Endothelial cell of umbilical vein (primary cell): ENCODE measurements at regions of chr6 and their contacts with region 1.

Region 1: DNA sequence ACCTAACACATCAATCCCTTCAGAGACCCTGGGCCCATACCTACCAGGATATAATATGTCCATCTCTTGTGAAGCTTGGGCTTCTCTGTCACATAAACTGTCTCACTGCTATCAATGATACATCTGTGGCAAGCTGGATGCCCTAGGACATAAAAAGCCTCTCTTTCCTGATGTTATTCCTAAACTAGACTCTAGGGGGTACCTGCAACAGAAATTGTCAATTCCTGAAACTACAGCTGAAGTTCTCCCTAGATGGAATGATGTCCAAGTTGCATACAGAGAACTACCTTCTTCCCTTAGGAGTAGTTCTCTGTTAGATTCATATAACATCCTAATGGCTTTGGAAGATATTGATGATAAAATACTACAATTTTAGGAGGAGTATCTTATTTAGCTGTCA is 35.8 kb downstream of the TBX18 start:
- DNase-seq: peak; percentile 39
- H3K4me3 ChIP-seq: no peak overlapping the region
- H3K27ac ChIP-seq: no peak overlapping the region
- H3K4me1 ChIP-seq: peaks cover 24% of the 10 kb centered on the region
- H3K27me3 ChIP-seq: no peaks in the 10 kb centered on the region
- CTCF ChIP-seq: peak; percentile 19 to 31
- POLR2A ChIP-seq: no peak

Region 2: DNA sequence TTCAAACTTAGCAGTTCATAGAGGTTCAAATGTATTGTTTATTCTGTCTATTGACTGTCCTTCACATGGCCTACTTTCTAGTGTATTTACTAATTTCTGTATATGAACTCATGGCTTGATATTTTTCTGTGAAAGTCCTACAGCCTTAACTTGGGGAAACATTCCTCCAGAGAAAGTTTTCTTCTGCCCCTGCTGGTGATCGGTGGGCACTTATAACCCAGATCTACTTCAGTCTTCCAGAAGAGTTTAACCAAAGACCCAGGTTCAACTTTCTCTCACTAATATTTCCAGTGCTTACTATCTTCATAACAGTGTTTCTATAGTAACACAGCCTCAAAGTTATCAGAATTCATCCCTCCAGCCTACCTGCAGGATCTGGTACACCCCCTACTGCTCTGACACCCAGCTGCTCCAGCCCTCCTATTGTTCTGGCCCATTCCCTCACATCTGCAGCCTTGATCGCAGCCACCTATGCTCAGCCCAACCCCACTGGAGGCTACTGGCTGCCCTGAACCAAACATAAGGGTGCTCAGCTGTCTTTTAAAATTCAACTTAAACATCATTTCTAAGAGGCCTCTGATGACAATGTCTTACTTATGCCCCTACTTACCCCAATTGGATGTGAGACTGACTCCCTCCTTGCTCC is 36.5 kb before region 1 on chr6:
- CTCF ChIA-PET with region 1: no interaction called
- POLR2A ChIA-PET with region 1: no interaction called
- dilution Hi-C with region 1: no loop called
- intact Hi-C with region 1: no loop called
- DNase-seq: no peak
- H3K4me3 ChIP-seq: no peak overlapping the region
- H3K27ac ChIP-seq: no peak overlapping the region
- H3K4me1 ChIP-seq: no peaks in the 10 kb centered on the region
- H3K27me3 ChIP-seq: no peaks in the 10 kb centered on the region
- CTCF ChIP-seq: no peak
- POLR2A ChIP-seq: no peak

Region 3: GRCh38 chr6:84752118-84752850 is 23.7 kb after region 1 on chr6:
- CTCF ChIA-PET with region 1: interaction called, 5 read pairs
- POLR2A ChIA-PET with region 1: no interaction called
- dilution Hi-C with region 1: no loop called
- intact Hi-C with region 1: loop called (anchors 2 kb)
- DNase-seq: no peak
- H3K4me3 ChIP-seq: no peak overlapping the region
- H3K27ac ChIP-seq: no peak overlapping the region
- H3K4me1 ChIP-seq: peaks cover 2% of the 10 kb centered on the region
- H3K27me3 ChIP-seq: no peaks in the 10 kb centered on the region
- CTCF ChIP-seq: peak in 1 of 2 donors; percentile 9
- POLR2A ChIP-seq: no peak